MCF 10A (cell line): ENCODE measurements at regions of chr18 and their contacts with region 1.

Region 1: GRCh38 chr18:59823596-59824195 is 76.1 kb upstream of the PMAIP1 start:
- DNase-seq: peak; percentile 83
- H3K4me3 Mint-ChIP-seq: no peak overlapping the region
- H3K27ac Mint-ChIP-seq: no peak overlapping the region
- H3K4me1 Mint-ChIP-seq: peaks cover 4% of the 10 kb centered on the region
- H3K27me3 Mint-ChIP-seq: no peaks in the 10 kb centered on the region
- CTCF ChIP-seq: peak; percentile 87

Region 2: DNA sequence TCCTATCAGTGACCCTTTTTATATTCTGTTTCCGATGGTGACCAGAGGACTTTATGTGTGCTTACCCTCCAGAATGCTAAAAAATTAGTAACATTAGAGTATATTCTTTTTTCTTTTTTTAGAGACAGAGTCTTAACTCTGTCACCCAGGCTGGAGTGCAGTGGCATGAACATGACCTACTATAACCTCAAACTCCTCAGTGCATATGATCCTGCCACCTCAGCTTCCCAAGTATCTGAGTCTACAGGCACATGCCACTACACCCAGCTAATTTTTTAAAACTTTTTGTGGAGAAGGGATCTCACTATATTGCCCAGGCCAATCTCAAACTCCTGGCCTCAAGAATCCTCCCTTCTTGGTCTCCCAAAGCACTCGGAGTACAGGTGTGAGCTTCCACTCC is 1077.8 kb before region 1 on chr18:
- CTCF ChIA-PET with region 1: no interaction called
- POLR2A ChIA-PET with region 1: no interaction called
- intact Hi-C with region 1: no loop called
- DNase-seq: no peak
- H3K4me3 Mint-ChIP-seq: no peak overlapping the region
- H3K27ac Mint-ChIP-seq: no peak overlapping the region
- H3K4me1 Mint-ChIP-seq: no peaks in the 10 kb centered on the region
- H3K27me3 Mint-ChIP-seq: no peaks in the 10 kb centered on the region
- CTCF ChIP-seq: no peak

Region 3: DNA sequence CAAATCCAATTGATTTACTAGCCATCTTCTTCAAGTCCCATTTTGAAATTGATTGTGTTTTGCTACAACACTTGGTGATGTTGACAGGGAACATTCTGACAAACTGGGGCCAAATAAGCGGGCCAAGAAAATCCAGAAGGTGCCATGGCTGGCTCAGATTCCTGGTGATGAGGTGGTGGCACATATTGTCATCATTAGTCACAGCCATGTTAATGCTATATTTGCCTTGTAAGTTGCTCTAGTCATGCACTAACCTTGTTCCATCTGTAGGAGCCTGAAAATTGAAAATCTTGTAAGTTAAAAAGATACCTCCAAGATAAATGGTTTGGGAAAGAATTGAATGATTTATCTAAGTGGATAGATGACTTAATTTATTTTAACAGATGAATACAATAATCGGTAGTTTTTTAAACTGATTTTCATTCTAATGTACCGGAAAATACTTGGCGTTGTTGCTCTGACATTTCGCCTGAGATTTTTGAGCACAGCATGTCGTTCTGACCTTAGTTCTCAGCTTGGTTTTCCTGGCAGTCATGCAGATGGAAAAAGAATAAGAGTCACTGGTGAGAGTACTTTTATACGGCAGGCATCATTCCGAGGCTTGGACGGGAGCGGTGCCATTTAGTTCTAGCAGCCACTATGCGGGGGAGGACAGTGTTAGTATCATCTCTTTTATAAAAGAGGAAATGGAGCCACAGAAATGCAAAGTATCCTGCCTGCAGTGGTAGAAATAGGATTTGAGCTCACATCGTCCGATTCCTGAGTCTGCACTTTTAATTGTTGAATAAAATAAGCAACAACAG is 825.1 kb before region 1 on chr18:
- CTCF ChIA-PET with region 1: no interaction called
- POLR2A ChIA-PET with region 1: no interaction called
- intact Hi-C with region 1: no loop called
- DNase-seq: peak; percentile 47
- H3K4me3 Mint-ChIP-seq: peak overlapping the region; percentile 42
- H3K27ac Mint-ChIP-seq: peak overlapping the region; percentile 63
- H3K4me1 Mint-ChIP-seq: peaks cover 27% of the 10 kb centered on the region
- H3K27me3 Mint-ChIP-seq: no peaks in the 10 kb centered on the region
- CTCF ChIP-seq: no peak

Region 4: DNA sequence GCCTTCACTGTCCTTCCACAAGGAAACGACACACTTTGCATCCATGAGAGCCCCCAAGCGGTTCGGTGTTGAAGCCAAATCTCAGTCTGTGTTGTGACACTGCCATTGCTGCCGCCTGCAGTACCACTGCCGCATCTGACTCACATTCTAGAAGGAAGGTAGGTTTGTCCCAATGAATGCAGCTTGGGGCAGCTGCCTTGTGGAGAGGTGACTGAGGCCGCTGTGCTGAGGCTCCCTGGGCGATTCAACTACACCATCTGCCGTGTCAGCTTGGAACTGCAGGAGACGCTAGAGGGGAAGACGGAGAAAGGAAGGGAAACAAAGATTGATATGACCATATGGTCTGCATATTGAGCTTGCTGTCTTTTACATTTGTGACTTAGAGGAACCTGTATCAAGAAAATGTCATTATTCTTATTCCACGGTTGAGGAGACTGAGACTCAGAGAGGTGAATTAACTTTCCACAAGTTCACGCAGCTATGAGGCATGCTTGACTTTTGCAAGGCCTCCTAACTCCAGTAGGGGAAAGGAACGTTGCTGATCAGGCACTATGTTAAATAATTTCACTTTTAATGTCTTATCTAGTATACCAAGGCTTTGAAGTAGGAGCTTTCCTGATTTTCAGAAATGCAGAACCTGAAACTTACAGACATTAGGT is 421.1 kb before region 1 on chr18:
- CTCF ChIA-PET with region 1: interaction called, 3 read pairs
- POLR2A ChIA-PET with region 1: interaction called, 3 read pairs
- intact Hi-C with region 1: loop called (anchors 5 kb)
- DNase-seq: peak; percentile 87
- H3K4me3 Mint-ChIP-seq: no peak overlapping the region
- H3K27ac Mint-ChIP-seq: no peak overlapping the region
- H3K4me1 Mint-ChIP-seq: no peaks in the 10 kb centered on the region
- H3K27me3 Mint-ChIP-seq: no peaks in the 10 kb centered on the region
- CTCF ChIP-seq: peak; percentile 98

Region 5: GRCh38 chr18:59470561-59471121 is 353.1 kb before region 1 on chr18:
- CTCF ChIA-PET with region 1: interaction called, 15 read pairs
- POLR2A ChIA-PET with region 1: no interaction called
- intact Hi-C with region 1: no loop called
- DNase-seq: no peak
- H3K4me3 Mint-ChIP-seq: no peak overlapping the region
- H3K27ac Mint-ChIP-seq: no peak overlapping the region
- H3K4me1 Mint-ChIP-seq: no peaks in the 10 kb centered on the region
- H3K27me3 Mint-ChIP-seq: no peaks in the 10 kb centered on the region
- CTCF ChIP-seq: no peak

Region 6: GRCh38 chr18:59660786-59661743 is 162.6 kb before region 1 on chr18:
- CTCF ChIA-PET with region 1: interaction called, 12 read pairs
- POLR2A ChIA-PET with region 1: no interaction called
- intact Hi-C with region 1: no loop called
- DNase-seq: peak; percentile 74
- H3K4me3 Mint-ChIP-seq: no peak overlapping the region
- H3K27ac Mint-ChIP-seq: peak overlapping the region; percentile 67
- H3K4me1 Mint-ChIP-seq: peaks cover 16% of the 10 kb centered on the region
- H3K27me3 Mint-ChIP-seq: no peaks in the 10 kb centered on the region
- CTCF ChIP-seq: no peak

Region 7: GRCh38 chr18:59697236-59697932 is 126.3 kb before region 1 on chr18 and contains the start of gene CCBE1:
- CTCF ChIA-PET with region 1: interaction called, 76 read pairs
- POLR2A ChIA-PET with region 1: interaction called, 17 read pairs
- intact Hi-C with region 1: loop called (anchors 1 kb)
- DNase-seq: peak; percentile 85
- H3K4me3 Mint-ChIP-seq: peak within 1 kb of the TSS; percentile 73
- H3K27ac Mint-ChIP-seq: peak within 1 kb of the TSS; percentile 69
- H3K4me1 Mint-ChIP-seq: peaks cover 36% of the 10 kb centered on the region
- H3K27me3 Mint-ChIP-seq: no peaks in the 10 kb centered on the region
- CTCF ChIP-seq: peak; percentile 99
- total RNA-seq, gene CCBE1: 23.8 and 28.9 TPM in 2 replicates

Region 8: GRCh38 chr18:59783138-59783537 is 40.6 kb before region 1 on chr18:
- CTCF ChIA-PET with region 1: interaction called, 118 read pairs
- POLR2A ChIA-PET with region 1: interaction called, 5 read pairs
- intact Hi-C with region 1: loop called (anchors 1 kb)
- DNase-seq: peak; percentile 70
- H3K4me3 Mint-ChIP-seq: no peak overlapping the region
- H3K27ac Mint-ChIP-seq: peak overlapping the region; percentile 0
- H3K4me1 Mint-ChIP-seq: peaks cover 40% of the 10 kb centered on the region
- H3K27me3 Mint-ChIP-seq: no peaks in the 10 kb centered on the region
- CTCF ChIP-seq: peak; percentile 51

Region 9: DNA sequence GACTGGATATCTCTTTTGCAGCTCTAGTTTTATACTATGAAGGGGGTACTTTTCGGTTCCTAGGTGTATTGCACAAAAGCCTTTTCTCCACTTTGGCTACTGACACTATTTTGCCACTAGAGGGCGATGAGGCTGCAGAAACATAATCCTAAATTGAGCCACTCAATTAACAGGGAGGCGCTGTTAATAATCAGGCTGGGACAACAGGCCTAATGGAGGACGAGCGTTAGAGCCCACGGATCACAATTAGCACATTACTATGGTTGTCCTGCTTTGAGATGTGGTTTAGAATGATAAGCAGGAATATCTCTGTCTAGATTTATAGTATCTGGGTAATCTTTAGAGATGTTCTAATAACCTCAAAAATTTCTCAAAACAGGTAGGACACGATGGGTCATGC is 13.9 kb after region 1 on chr18:
- CTCF ChIA-PET with region 1: interaction called, 15 read pairs
- POLR2A ChIA-PET with region 1: no interaction called
- intact Hi-C with region 1: no loop called
- DNase-seq: peak; percentile 82
- H3K4me3 Mint-ChIP-seq: no peak overlapping the region
- H3K27ac Mint-ChIP-seq: no peak overlapping the region
- H3K4me1 Mint-ChIP-seq: peaks cover 1% of the 10 kb centered on the region
- H3K27me3 Mint-ChIP-seq: no peaks in the 10 kb centered on the region
- CTCF ChIP-seq: peak; percentile 83

Region 10: GRCh38 chr18:59870623-59871130 is 47.0 kb after region 1 on chr18:
- CTCF ChIA-PET with region 1: no interaction called
- POLR2A ChIA-PET with region 1: no interaction called
- intact Hi-C with region 1: no loop called
- DNase-seq: no peak
- H3K4me3 Mint-ChIP-seq: no peak overlapping the region
- H3K27ac Mint-ChIP-seq: no peak overlapping the region
- H3K4me1 Mint-ChIP-seq: peaks cover 13% of the 10 kb centered on the region
- H3K27me3 Mint-ChIP-seq: no peaks in the 10 kb centered on the region
- CTCF ChIP-seq: no peak

Region 11: GRCh38 chr18:60053747-60054304 is 230.1 kb after region 1 on chr18:
- CTCF ChIA-PET with region 1: no interaction called
- POLR2A ChIA-PET with region 1: no interaction called
- intact Hi-C with region 1: no loop called
- DNase-seq: peak; percentile 97
- H3K4me3 Mint-ChIP-seq: no peak overlapping the region
- H3K27ac Mint-ChIP-seq: peak overlapping the region; percentile 64
- H3K4me1 Mint-ChIP-seq: peaks cover 11% of the 10 kb centered on the region
- H3K27me3 Mint-ChIP-seq: peaks cover 23% of the 10 kb centered on the region
- CTCF ChIP-seq: no peak